ENCODE measurements at regions of chr17 and their contacts with region 1.

Region 1: DNA sequence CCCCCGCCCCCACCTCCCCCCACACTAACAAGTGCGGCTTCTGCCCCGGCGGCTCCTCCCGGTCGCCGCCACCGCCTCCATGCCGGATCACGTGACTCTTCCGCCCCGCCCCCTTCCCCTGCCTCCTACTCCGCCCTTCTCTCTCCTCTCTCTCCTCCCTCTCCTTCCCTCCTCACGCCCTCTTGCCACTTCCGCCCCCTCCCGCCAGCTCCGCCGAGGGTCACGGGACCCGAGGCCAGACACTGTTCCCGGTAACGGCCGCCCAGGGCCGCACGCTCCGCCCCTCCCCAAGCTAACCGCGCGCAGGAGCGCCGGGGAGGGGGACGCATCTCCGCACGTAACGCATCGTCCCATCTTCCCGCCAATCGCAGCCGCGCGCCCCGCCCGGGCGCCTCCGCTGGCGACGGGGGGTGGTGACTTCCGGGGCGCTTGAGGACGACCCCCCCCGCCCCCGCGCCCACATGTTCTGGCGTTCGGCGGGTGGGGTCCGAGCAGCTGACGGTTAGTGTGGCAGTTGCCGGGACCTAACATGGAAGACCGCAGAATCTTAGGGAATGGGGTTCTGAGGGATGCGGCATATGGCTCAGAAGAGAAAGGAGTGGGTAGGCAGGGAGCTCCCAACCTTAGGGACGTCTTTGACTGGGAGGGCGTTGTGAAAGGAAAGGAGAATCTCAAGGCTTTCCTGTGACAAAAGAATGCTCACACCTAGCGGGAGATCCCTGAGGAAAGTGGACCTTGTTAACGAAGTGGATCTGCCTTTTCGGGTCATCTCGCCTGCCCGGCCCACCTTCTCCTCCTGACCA is at the start of gene USP32:
- DNase-seq: peak; percentile 94 to 99 (median 98)
- ATAC-seq: peak; percentile 87
- H3K4me3 ChIP-seq: peak within 1 kb of the TSS; percentile 97
- H3K4me3 Mint-ChIP-seq: peak within 1 kb of the TSS; percentile 98
- H3K27ac ChIP-seq: peak within 1 kb of the TSS; percentile 88 to 94
- H3K27ac Mint-ChIP-seq: peak within 1 kb of the TSS; percentile 91
- H3K4me1 ChIP-seq: peaks cover 28% of the 10 kb centered on the region
- H3K4me1 Mint-ChIP-seq: peaks cover 45% of the 10 kb centered on the region
- H3K27me3 ChIP-seq: no peaks in the 10 kb centered on the region
- H3K27me3 Mint-ChIP-seq: no peaks in the 10 kb centered on the region
- CTCF ChIP-seq: peak; percentile 50
- total RNA-seq, gene USP32: 23.9 to 24.7 TPM

Region 2: GRCh38 chr17:59565171-59565969 is 826.9 kb before region 1 on chr17 and contains the start of gene DHX40:
- CTCF ChIA-PET with region 1: no interaction called
- POLR2A ChIA-PET with region 1: no interaction called
- intact Hi-C with region 1: loop called in 1 of 2 experiments (anchors 10 kb)
- DNase-seq: peak; percentile 86 to 99 (median 92)
- ATAC-seq: peak; percentile 87
- H3K4me3 ChIP-seq: peak within 1 kb of the TSS; percentile 90
- H3K4me3 Mint-ChIP-seq: peak within 1 kb of the TSS; percentile 100
- H3K27ac ChIP-seq: peak within 1 kb of the TSS; percentile 86 to 91
- H3K27ac Mint-ChIP-seq: peak within 1 kb of the TSS; percentile 97
- H3K4me1 ChIP-seq: peaks cover 13% of the 10 kb centered on the region
- H3K4me1 Mint-ChIP-seq: peaks cover 26% of the 10 kb centered on the region
- H3K27me3 ChIP-seq: no peaks in the 10 kb centered on the region
- H3K27me3 Mint-ChIP-seq: no peaks in the 10 kb centered on the region
- CTCF ChIP-seq: no peak
- total RNA-seq, gene DHX40: 62.6 to 65.6 TPM

Region 3: GRCh38 chr17:59892924-59893676 is 499.1 kb before region 1 on chr17 and contains the starts of genes RPS6KB1 and TUBD1:
- CTCF ChIA-PET with region 1: no interaction called
- POLR2A ChIA-PET with region 1: no interaction called
- intact Hi-C with region 1: loop called in 1 of 2 experiments (anchors 5 kb)
- DNase-seq: peak; percentile 94 to 100 (median 97)
- ATAC-seq: peak; percentile 91
- H3K4me3 ChIP-seq: peak within 1 kb of the TSS; percentile 79
- H3K4me3 Mint-ChIP-seq: peak within 1 kb of the TSS; percentile 98
- H3K27ac ChIP-seq: peak within 1 kb of the TSS; percentile 88 to 94
- H3K27ac Mint-ChIP-seq: peak within 1 kb of the TSS; percentile 94
- H3K4me1 ChIP-seq: peaks cover 44% of the 10 kb centered on the region
- H3K4me1 Mint-ChIP-seq: peaks cover 65% of the 10 kb centered on the region
- H3K27me3 ChIP-seq: no peaks in the 10 kb centered on the region
- H3K27me3 Mint-ChIP-seq: no peaks in the 10 kb centered on the region
- CTCF ChIP-seq: no peak
- total RNA-seq, gene RPS6KB1: 129 to 135 TPM
- total RNA-seq, gene TUBD1: 7.3 to 9.4 TPM

Region 4: DNA sequence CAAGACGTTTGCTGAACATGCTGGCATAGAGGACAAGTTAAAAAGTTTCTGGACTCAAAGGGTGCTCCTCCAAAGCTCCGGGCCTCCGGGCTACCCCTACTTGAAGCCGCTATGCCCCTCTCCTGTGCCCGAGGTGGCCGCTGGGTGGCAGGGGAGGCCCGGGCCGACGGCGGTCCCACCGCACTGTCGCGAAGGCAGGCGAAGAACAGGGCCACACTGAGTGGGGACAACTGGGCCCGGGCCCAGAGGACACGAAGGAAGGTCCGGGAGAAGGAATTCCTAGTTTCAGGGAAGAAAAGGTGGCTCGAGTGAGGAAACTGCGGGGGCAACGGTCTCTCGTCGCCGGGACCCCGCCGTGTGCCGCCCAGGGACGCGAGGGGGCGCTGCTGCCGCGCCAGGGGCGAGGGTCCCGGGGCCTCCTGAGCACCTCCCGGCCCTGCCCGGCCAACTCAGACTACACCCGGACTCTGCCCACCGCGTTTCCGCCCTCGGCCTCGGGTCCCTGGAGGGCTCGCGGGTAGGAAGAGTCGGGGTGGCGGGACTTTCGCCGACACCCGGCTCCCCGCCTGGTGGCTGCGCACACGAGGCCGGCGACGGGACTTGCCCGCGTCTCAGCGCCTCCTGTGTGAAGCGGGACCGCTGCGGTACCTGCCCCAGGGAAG is 29.2 kb after region 1 on chr17:
- CTCF ChIA-PET with region 1: interaction called, 7 read pairs
- POLR2A ChIA-PET with region 1: interaction called, 5 read pairs
- intact Hi-C with region 1: loop called in 1 of 2 experiments (anchors 2 kb)
- DNase-seq: peak; percentile 55 to 85 (median 65)
- ATAC-seq: peak; percentile 95
- H3K4me3 ChIP-seq: peak overlapping the region; percentile 52
- H3K4me3 Mint-ChIP-seq: peak overlapping the region; percentile 79
- H3K27ac ChIP-seq: no peak overlapping the region
- H3K27ac Mint-ChIP-seq: peak overlapping the region; percentile 24
- H3K4me1 ChIP-seq: peaks cover 13% of the 10 kb centered on the region
- H3K4me1 Mint-ChIP-seq: peaks cover 5% of the 10 kb centered on the region
- H3K27me3 ChIP-seq: no peaks in the 10 kb centered on the region
- H3K27me3 Mint-ChIP-seq: no peaks in the 10 kb centered on the region
- CTCF ChIP-seq: peak; percentile 100

Region 5: GRCh38 chr17:60525685-60526514 is 133.7 kb after region 1 on chr17 and contains the start of gene APPBP2:
- CTCF ChIA-PET with region 1: no interaction called
- POLR2A ChIA-PET with region 1: interaction called, 4 read pairs
- intact Hi-C with region 1: loop called in 1 of 2 experiments (anchors 2 kb)
- DNase-seq: peak; percentile 47 to 89 (median 64)
- ATAC-seq: peak; percentile 84
- H3K4me3 ChIP-seq: peak within 1 kb of the TSS; percentile 93
- H3K4me3 Mint-ChIP-seq: peak within 1 kb of the TSS; percentile 99
- H3K27ac ChIP-seq: peak within 1 kb of the TSS; percentile 93 to 98
- H3K27ac Mint-ChIP-seq: peak within 1 kb of the TSS; percentile 98
- H3K4me1 ChIP-seq: peaks cover 15% of the 10 kb centered on the region
- H3K4me1 Mint-ChIP-seq: peaks cover 58% of the 10 kb centered on the region
- H3K27me3 ChIP-seq: no peaks in the 10 kb centered on the region
- H3K27me3 Mint-ChIP-seq: no peaks in the 10 kb centered on the region
- CTCF ChIP-seq: no peak
- total RNA-seq, gene APPBP2: 18.5 to 18.7 TPM

Region 6: DNA sequence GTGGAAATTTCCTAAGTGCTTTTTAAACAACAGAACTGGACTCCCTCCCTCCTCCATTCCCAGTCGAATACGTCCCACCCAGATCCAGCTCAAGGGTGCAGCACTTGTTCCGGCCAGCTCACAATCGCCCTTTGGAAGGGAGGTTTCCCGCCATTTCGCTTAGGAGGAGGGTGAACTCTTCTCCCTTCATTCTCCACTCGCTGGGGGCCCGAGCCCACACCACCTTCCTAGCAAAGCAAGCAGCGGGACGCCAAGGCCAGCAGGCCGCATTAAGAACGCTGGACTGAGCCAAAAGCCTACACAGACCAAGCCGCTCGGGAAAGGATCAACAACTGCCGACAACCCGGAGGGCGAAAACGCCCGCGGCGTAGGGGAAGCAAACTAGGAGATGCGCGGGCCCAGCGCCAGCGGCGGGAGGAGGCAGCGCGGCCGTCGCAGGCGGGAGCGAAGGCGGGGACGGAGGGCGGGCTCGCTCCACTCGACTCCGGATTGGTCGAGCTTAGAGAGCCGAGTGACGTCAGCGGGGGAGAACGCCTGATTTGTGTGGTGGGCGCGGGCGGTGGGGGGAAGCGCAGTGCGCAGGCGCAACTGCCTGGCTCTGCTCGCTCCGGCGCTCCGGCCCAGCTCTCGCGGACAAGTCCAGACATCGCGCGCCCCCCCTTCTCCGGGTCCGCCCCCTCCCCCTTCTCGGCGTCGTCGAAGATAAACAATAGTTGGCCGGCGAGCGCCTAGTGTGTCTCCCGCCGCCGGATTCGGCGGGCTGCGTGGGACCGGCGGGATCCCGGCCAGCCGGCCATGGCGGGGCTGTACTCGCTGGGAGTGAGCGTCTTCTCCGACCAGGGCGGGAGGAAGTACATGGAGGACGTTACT is 207.6 kb after region 1 on chr17 and contains the start of gene PPM1D:
- CTCF ChIA-PET with region 1: no interaction called
- POLR2A ChIA-PET with region 1: interaction called, 7 read pairs
- intact Hi-C with region 1: loop called (anchors 5 kb)
- DNase-seq: peak; percentile 95 to 100 (median 97)
- ATAC-seq: peak; percentile 95
- H3K4me3 ChIP-seq: peak within 1 kb of the TSS; percentile 87
- H3K4me3 Mint-ChIP-seq: peak within 1 kb of the TSS; percentile 98
- H3K27ac ChIP-seq: peak within 1 kb of the TSS; percentile 84 to 87
- H3K27ac Mint-ChIP-seq: peak within 1 kb of the TSS; percentile 94
- H3K4me1 ChIP-seq: peaks cover 23% of the 10 kb centered on the region
- H3K4me1 Mint-ChIP-seq: peaks cover 50% of the 10 kb centered on the region
- H3K27me3 ChIP-seq: no peaks in the 10 kb centered on the region
- H3K27me3 Mint-ChIP-seq: no peaks in the 10 kb centered on the region
- CTCF ChIP-seq: no peak
- total RNA-seq, gene PPM1D: 18.1 to 18.3 TPM

Region 7: DNA sequence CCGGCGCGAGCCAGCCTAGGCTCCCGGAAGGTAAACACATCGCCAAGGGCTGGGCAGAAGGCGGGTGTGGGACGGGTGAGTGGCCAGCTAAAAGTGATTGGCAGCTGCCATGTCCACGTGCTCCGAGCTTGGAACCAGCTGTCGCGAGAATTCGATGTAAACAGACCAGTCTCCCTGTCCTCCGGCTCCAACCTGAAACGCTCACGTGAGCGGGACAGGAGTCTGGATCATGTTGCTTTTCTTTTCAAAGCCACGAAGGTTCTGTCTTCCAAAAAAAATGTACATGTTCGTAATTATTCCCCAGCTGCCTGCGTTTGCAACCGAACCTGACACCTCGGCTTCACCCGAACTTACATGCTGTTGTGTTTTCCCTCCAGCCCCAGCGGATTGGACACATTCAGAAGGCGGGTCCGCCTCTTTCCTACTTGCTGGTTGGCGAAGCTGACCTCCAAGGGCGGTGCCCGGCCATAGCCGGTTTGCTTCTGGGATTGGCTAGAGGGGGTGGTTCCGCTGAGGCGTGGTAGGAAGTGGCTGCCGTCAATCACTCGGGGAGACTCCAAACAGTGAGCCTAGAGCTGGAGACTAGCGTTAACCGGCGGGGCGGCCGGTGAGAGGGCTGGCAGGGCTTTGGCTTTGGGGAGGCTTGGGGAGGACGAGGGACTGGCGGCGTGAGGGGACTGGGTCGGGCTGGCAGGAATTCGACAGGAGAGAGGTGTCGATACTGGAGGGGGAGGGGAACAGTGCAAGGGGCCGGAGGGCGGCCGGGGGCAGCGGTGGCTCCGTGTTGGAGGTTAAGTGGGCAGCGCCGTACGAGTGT is 285.3 kb after region 1 on chr17 and contains the start of gene BCAS3:
- CTCF ChIA-PET with region 1: no interaction called
- POLR2A ChIA-PET with region 1: interaction called, 15 read pairs
- intact Hi-C with region 1: loop called in 1 of 2 experiments (anchors 5 kb)
- DNase-seq: peak; percentile 92 to 98 (median 94)
- ATAC-seq: peak; percentile 96
- H3K4me3 ChIP-seq: peak within 1 kb of the TSS; percentile 66
- H3K4me3 Mint-ChIP-seq: peak within 1 kb of the TSS; percentile 97
- H3K27ac ChIP-seq: peak within 1 kb of the TSS; percentile 60 to 76
- H3K27ac Mint-ChIP-seq: peak within 1 kb of the TSS; percentile 93
- H3K4me1 ChIP-seq: peaks cover 13% of the 10 kb centered on the region
- H3K4me1 Mint-ChIP-seq: peaks cover 25% of the 10 kb centered on the region
- H3K27me3 ChIP-seq: no peaks in the 10 kb centered on the region
- H3K27me3 Mint-ChIP-seq: no peaks in the 10 kb centered on the region
- CTCF ChIP-seq: no peak
- total RNA-seq, gene BCAS3: 20.1 to 31.8 TPM

Region 8: GRCh38 chr17:60704170-60704569 is 311.9 kb after region 1 on chr17:
- CTCF ChIA-PET with region 1: no interaction called
- POLR2A ChIA-PET with region 1: no interaction called
- intact Hi-C with region 1: no loop called
- DNase-seq: no peak
- ATAC-seq: no peak
- H3K4me3 ChIP-seq: no peak overlapping the region
- H3K4me3 Mint-ChIP-seq: no peak overlapping the region
- H3K27ac ChIP-seq: no peak overlapping the region
- H3K27ac Mint-ChIP-seq: no peak overlapping the region
- H3K4me1 ChIP-seq: no peaks in the 10 kb centered on the region
- H3K4me1 Mint-ChIP-seq: no peaks in the 10 kb centered on the region
- H3K27me3 ChIP-seq: no peaks in the 10 kb centered on the region
- H3K27me3 Mint-ChIP-seq: no peaks in the 10 kb centered on the region
- CTCF ChIP-seq: no peak